Pancreas (tissue), 10 donors: ENCODE measurements at regions of chr12 and their contacts with region 1.

Region 1: DNA sequence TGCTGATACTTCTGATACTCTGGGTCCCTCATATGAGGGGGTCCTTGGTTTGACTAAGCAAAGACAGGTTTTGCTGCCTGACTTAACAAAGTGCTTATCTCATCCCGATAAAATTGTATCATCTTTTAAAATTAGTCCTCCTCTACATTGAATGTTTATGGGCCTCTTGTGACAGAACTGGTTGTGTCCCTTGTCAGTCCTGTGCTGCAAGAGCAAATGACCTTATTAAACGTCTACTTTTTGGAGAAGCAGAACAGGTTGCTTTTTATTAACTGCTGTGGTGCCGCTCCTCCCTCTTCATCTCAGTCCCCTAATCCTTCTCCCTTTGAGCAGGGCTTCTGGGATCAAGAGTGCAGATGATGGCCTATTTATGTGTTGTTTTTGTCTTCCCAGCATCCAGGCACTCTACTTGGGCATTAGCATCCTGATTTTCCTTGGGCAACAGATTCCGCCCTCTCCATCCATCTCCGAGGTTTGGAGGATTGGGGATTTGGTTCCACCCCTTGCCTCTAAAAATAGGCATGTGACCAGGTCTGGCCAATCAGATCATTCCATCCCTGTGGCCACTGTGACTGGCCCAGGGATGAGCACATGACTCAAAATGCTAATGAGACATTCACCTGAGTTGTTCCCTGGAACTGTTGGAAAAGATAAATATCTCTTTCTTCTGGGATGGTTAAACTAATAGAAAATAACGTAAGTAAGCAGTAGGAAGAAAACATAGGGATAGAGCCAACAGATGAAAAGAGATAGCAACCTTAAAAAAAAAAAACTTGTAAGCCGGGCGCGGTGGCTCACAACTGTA is 2.9 kb upstream of the DENR start:
- DNase-seq: no peak
- ATAC-seq: no peak
- H3K4me3 ChIP-seq: no peak overlapping the region
- H3K27ac ChIP-seq: no peak overlapping the region
- H3K4me1 ChIP-seq: peaks cover 5 to 10% (median 8%) of the 10 kb centered on the region in 3 donors
- H3K27me3 ChIP-seq: no peaks in the 10 kb centered on the region
- CTCF ChIP-seq: no peak

Region 2: GRCh38 chr12:122646517-122647217 is 103.1 kb before region 1 on chr12:
- intact Hi-C with region 1: loop called in 1 of 3 experiments (anchors 10 kb)
- DNase-seq: no peak
- ATAC-seq: peak in 2 of 4 donors; percentile 44 to 53
- H3K4me3 ChIP-seq: no peak overlapping the region
- H3K27ac ChIP-seq: no peak overlapping the region
- H3K4me1 ChIP-seq: no peaks in the 10 kb centered on the region
- H3K27me3 ChIP-seq: no peaks in the 10 kb centered on the region
- CTCF ChIP-seq: no peak